ENCODE measurements at regions of chr19 and their contacts with region 1.

Region 1: DNA sequence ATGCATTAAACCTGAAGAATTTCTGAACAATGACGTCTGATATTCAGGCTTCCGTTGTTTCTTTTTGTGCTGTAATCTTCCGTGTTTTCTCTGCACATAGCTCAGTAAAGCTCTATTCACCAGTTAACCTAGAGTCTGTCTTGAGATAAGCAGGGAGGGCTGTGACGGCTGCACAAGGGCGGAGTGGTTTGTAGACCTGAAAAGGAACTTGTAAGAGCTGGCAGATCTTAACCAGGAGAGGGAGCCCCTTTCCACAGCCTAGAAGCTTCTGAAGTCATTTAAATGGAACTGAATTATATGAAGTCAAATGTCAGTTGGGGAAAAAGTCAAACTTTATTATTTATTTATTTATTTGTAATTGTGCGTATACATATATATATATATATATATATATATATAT is 27.5 kb downstream of the DPRX start:
- DNase-seq: peak; percentile 77 to 86
- H3K4me3 ChIP-seq: no peak overlapping the region
- H3K4me3 Mint-ChIP-seq: peak overlapping the region; percentile 61
- H3K27ac Mint-ChIP-seq: peak overlapping the region; percentile 96
- H3K4me1 ChIP-seq: 0 out of 2 replicates have a peak, but pooled peaks cover 6% of the 10 kb centered on the region
- H3K4me1 Mint-ChIP-seq: peaks cover 12% of the 10 kb centered on the region
- H3K27me3 ChIP-seq: no peaks in the 10 kb centered on the region
- H3K27me3 Mint-ChIP-seq: no peaks in the 10 kb centered on the region
- CTCF ChIP-seq: peak; percentile 53 to 56

Region 2: DNA sequence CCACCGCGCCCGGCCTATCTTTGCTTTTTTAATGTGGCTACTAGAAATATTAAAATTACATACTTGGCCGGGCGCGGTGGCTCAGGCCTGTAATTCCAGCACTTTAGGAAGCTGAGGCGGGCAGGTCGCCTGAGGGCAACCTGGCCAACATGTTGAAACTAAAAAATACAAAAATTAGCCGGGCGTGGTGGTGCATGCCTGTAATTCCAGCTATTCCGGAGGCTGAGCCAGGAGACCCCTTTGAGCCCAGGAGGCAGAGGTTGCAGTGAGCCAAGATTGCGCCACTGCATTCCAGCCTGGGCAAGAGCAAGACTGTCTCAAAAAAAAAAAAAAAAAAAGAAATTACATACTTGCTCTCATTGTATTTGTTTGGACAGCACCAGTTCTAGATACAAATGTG is 62.3 kb before region 1 on chr19:
- CTCF ChIA-PET with region 1: no interaction called
- POLR2A ChIA-PET with region 1: no interaction called
- intact Hi-C with region 1: loop called (anchors 1 kb)
- DNase-seq: peak; percentile 59 to 84
- H3K4me3 ChIP-seq: no peak overlapping the region
- H3K4me3 Mint-ChIP-seq: no peak overlapping the region
- H3K27ac Mint-ChIP-seq: peak overlapping the region; percentile 87
- H3K4me1 ChIP-seq: peaks cover 23% of the 10 kb centered on the region
- H3K4me1 Mint-ChIP-seq: peaks cover 11% of the 10 kb centered on the region
- H3K27me3 ChIP-seq: no peaks in the 10 kb centered on the region
- H3K27me3 Mint-ChIP-seq: no peaks in the 10 kb centered on the region
- CTCF ChIP-seq: no peak

Region 3: DNA sequence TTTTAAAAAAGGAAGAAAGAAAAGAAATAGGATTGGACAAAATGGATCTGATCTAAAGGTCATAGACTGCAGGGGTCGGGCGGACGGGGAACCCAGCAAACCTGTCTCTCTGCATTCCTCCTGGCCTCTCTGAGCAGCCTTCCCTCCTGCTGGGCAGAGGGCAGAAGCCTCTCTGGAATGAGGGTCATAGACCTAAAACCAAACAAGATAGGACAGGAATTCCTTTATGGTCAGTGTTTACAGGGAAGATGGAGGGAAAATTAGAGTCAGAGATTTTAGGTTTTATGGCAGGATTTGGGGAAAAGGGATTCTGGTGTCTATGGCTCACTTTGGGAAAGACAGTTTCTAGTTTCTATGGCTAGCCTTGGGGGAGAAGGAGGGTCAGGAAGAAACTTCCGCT is 46.5 kb before region 1 on chr19:
- CTCF ChIA-PET with region 1: interaction called, 5 read pairs
- POLR2A ChIA-PET with region 1: no interaction called
- intact Hi-C with region 1: loop called (anchors 2 kb)
- DNase-seq: peak; percentile 92 to 94
- H3K4me3 ChIP-seq: 0 out of 2 replicates have a peak overlapping the region, but pooled peaks have one; percentile 0
- H3K4me3 Mint-ChIP-seq: peak overlapping the region; percentile 60
- H3K27ac Mint-ChIP-seq: peak overlapping the region; percentile 96
- H3K4me1 ChIP-seq: peaks cover 37% of the 10 kb centered on the region
- H3K4me1 Mint-ChIP-seq: peaks cover 7% of the 10 kb centered on the region
- H3K27me3 ChIP-seq: no peaks in the 10 kb centered on the region
- H3K27me3 Mint-ChIP-seq: no peaks in the 10 kb centered on the region
- CTCF ChIP-seq: no peak

Region 4: GRCh38 chr19:53621885-53622740 is 37.2 kb before region 1 on chr19:
- CTCF ChIA-PET with region 1: no interaction called
- POLR2A ChIA-PET with region 1: no interaction called
- intact Hi-C with region 1: loop called (anchors 2 kb)
- DNase-seq: peak; percentile 65 to 67
- H3K4me3 ChIP-seq: no peak overlapping the region
- H3K4me3 Mint-ChIP-seq: peak overlapping the region; percentile 3
- H3K27ac Mint-ChIP-seq: peak overlapping the region; percentile 89
- H3K4me1 ChIP-seq: peaks cover 36% of the 10 kb centered on the region
- H3K4me1 Mint-ChIP-seq: peaks cover 20% of the 10 kb centered on the region
- H3K27me3 ChIP-seq: no peaks in the 10 kb centered on the region
- H3K27me3 Mint-ChIP-seq: no peaks in the 10 kb centered on the region
- CTCF ChIP-seq: no peak

Region 5: DNA sequence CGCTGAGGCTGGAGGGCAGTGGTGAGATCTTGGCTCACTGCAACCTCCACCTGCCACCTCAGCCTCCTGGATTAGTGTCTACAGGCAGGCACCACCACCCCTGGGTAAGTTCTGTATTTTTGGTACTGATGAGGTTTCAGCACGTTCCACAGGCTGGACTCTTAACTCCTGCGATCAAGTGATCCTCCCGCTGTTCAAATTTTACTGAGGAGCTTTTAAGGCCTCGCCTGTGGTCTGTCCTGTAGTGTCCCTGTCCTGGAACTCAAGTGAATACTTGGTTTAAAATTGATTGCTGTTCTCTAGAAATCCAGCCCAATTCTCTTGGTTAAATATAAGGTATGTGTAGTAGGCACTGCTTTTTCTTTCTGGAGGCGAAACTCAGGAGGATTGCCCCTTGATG is 37.7 kb after region 1 on chr19:
- CTCF ChIA-PET with region 1: no interaction called
- POLR2A ChIA-PET with region 1: no interaction called
- intact Hi-C with region 1: no loop called
- DNase-seq: no peak
- H3K4me3 ChIP-seq: no peak overlapping the region
- H3K4me3 Mint-ChIP-seq: no peak overlapping the region
- H3K27ac Mint-ChIP-seq: no peak overlapping the region
- H3K4me1 ChIP-seq: no peaks in the 10 kb centered on the region
- H3K4me1 Mint-ChIP-seq: no peaks in the 10 kb centered on the region
- H3K27me3 ChIP-seq: no peaks in the 10 kb centered on the region
- H3K27me3 Mint-ChIP-seq: no peaks in the 10 kb centered on the region
- CTCF ChIP-seq: no peak

Region 6: DNA sequence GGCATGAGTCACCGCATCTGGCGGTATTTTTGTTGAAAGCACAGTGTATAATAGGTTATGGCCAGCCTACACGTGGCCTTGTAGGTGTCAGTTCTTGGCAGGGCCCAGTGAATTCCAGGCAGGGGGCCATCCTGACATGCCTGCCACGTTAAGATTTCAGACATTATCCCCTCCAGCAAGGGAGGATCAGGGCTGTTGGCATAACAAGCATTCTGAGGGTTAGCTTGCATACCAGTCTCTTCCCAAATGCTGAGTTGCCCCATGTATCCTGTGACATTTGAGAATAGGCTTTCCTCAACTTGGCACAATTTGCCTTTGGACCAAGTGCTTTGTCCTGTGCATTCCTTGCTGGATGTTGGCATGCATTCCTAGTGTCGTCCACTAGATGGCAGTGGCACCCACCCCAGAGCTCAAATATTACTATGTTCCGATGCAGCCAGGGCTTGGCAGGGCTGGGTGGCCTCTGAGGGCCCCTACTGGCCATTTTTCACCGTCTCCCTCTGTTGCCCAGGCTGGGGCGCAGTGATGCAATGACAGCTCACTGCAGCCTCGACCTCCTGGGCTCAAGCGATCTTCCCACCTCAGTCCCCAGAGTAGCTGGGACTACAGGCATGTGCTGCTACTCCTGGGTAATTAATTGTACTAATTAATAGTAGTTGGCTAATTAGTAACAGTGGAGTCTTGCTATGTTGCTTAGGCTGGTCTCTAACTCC is 133.6 kb after region 1 on chr19:
- CTCF ChIA-PET with region 1: interaction called, 15 read pairs
- POLR2A ChIA-PET with region 1: interaction called, 5 read pairs
- intact Hi-C with region 1: loop called (anchors 2 kb)
- DNase-seq: peak; percentile 90
- H3K4me3 ChIP-seq: no peak overlapping the region
- H3K4me3 Mint-ChIP-seq: peak overlapping the region; percentile 59
- H3K27ac Mint-ChIP-seq: peak overlapping the region; percentile 86
- H3K4me1 ChIP-seq: peaks cover 27% of the 10 kb centered on the region
- H3K4me1 Mint-ChIP-seq: no peaks in the 10 kb centered on the region
- H3K27me3 ChIP-seq: no peaks in the 10 kb centered on the region
- H3K27me3 Mint-ChIP-seq: no peaks in the 10 kb centered on the region
- CTCF ChIP-seq: peak; percentile 90 to 97